ENCODE measurements at regions of chr18 and their contacts with region 1.

Region 1: DNA sequence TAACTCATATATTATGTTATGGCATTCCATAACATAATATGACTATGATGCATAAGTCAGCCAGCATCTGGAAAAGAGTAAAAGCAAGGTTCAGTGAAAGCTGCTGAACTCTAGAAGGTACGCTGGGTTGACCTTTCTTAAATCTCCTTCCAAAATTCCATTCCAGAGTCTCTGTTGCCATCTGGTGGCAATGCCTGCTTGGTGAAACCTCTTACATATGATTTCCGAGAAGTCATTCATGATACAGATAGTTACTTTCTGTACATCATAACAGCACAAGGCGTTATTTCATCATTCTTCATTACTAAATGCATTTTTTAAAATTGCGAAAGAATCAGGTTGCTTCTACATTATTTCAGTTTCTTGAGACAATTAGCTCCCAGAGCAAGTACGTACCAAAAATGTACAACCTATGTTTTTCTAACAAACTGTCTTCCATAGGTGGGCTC is 7.0 kb upstream of the EPG5 start:
- DNase-seq: peak; percentile 91
- H3K4me3 Mint-ChIP-seq: no peak overlapping the region
- H3K27ac Mint-ChIP-seq: peak overlapping the region; percentile 78
- H3K4me1 Mint-ChIP-seq: peaks cover 14% of the 10 kb centered on the region
- H3K27me3 Mint-ChIP-seq: no peaks in the 10 kb centered on the region

Region 2: GRCh38 chr18:45275367-45276113 is 698.6 kb before region 1 on chr18:
- CTCF ChIA-PET with region 1: no interaction called
- intact Hi-C with region 1: loop called (anchors 5 kb)
- DNase-seq: no peak
- H3K4me3 Mint-ChIP-seq: no peak overlapping the region
- H3K27ac Mint-ChIP-seq: no peak overlapping the region
- H3K4me1 Mint-ChIP-seq: no peaks in the 10 kb centered on the region
- H3K27me3 Mint-ChIP-seq: peaks cover 2% of the 10 kb centered on the region

Region 3: DNA sequence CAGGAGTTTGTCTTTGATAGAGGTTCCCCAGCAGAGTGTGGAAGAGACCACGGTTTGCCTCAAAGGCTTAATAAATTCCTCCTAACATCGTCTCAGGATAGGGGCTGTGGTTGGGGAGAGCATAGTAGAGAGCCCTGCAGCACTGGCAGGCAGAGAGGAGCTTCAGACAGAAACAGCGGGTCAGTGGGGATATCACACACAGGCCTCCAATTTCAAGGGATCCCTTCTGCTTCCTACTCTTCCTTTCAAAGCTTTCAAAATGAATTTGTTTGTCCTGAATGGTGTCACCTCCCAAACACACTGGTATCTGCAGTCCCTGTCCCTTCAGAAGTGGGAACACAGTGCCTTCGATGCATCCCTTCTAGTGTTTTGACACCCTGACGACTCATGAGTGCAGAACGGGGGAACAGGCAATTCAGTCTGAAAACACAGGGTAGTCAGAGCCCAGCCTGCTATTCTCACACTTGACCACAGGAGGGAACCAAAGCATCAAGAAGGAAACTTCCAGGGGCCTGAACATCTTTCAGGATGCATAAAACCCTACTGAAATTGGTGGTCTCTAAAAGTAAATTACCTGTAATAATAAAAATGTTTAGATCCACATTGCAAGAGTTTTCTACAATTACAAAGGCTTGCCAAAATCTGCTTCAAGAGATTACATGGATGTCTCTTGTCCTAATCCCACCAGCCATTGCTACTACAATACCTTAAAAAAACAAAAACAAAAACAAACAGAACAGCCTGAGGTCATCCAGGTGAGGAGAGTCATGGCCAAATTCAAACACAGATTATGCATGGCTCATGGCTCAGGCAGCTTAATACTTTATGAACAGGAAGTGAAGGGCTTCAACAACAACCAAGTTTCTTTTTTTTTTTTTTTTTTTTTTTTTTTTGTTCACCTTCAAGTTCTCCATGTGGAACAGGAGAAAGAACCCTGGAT is 309.0 kb before region 1 on chr18:
- CTCF ChIA-PET with region 1: interaction called, 18 read pairs
- intact Hi-C with region 1: loop called (anchors 1 kb)
- DNase-seq: peak; percentile 82
- H3K4me3 Mint-ChIP-seq: no peak overlapping the region
- H3K27ac Mint-ChIP-seq: no peak overlapping the region
- H3K4me1 Mint-ChIP-seq: peaks cover 52% of the 10 kb centered on the region
- H3K27me3 Mint-ChIP-seq: no peaks in the 10 kb centered on the region

Region 4: DNA sequence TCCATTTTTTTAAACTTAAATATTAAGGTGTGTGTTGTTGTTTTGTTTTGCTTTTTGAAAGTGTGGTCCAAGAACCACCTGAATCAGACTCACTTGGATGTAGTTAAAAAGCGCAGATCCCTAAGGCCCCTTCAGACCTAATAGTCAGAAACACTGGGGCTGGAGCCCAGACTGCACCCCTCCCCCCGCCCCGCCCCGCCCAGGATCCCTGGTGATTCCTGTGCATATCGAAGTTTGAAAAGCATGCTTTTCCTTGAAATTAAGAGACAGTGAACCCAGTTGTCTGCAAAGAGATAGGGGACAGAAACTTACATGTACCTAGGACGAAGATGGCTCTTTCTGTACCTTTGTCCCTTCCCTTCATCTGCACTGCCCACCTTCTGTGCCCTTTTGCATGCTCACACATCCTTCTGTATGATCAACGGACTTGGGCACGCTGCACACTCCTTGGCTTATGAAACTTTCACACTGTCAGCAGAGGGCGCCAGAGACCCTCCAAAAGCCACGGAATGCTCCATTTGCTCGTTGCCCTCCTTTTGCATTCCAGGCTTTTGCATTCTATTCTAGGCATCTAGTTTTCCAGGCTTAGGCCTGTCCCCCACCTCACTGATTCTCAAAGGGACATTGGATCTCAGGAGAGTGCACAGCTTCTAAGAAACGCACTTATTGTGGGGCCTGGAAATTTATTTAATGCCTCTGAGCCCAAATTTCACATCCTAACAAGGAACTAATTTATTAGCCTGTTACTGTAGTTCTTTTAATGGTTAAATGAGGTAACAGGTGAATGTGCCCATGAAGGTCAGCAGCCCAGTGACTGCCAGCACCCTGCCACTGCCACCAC is 282.9 kb before region 1 on chr18:
- CTCF ChIA-PET with region 1: interaction called, 4 read pairs
- intact Hi-C with region 1: loop called (anchors 1 kb)
- DNase-seq: peak; percentile 89
- H3K4me3 Mint-ChIP-seq: no peak overlapping the region
- H3K27ac Mint-ChIP-seq: no peak overlapping the region
- H3K4me1 Mint-ChIP-seq: peaks cover 36% of the 10 kb centered on the region
- H3K27me3 Mint-ChIP-seq: no peaks in the 10 kb centered on the region

Region 5: DNA sequence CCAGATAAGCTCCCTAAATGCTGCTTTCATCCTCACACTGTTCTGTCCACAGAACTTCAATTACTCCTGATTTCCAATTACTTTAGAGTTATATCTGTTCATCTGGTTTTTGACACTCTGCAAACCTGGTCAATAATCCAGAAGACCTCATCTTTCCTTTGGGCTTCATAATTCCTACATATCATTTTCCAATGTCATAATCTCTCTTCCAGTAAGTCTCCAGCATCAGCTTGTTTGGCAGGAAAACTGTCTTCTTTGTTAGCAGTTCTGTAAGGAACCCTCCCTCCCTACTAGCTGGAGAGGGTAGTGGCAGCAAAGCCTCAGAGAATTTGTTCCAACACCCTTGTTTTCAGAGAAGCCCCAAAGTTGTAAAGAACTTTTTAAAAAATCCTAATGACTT is 262.1 kb before region 1 on chr18:
- CTCF ChIA-PET with region 1: no interaction called
- intact Hi-C with region 1: no loop called
- DNase-seq: no peak
- H3K4me3 Mint-ChIP-seq: no peak overlapping the region
- H3K27ac Mint-ChIP-seq: no peak overlapping the region
- H3K4me1 Mint-ChIP-seq: no peaks in the 10 kb centered on the region
- H3K27me3 Mint-ChIP-seq: no peaks in the 10 kb centered on the region

Region 6: DNA sequence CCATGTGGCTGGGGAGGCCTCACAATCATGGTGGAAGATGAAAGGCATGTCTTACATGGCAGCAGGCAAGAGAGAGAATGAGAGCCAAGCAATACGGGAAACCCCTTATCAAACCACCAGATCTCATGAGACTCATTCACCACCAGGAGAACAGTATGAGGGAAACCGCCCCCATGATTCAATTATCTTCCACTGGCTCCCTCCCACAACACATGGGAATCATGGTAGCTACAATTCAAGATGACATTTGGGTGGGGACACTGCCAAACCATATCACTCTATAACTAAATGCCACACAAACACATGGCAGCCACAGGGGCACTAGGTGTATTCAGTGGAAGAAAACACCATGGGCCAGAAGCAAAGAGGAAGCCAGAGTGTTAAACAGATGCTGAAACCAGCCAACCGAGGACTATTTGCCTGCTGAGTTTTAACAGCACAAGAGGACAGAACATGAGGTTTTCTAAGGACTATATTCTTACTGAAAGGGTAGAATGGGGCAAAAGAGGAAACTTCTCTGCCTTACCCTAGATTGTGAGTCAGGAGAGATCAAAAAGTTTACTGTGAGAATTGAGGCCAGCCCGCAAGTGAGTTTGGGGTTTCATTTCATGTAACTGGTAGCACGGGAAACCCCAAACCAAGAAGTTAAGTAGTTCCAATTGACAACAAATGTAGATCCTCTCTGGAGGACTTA is 99.5 kb before region 1 on chr18:
- CTCF ChIA-PET with region 1: no interaction called
- intact Hi-C with region 1: loop called (anchors 1 kb)
- DNase-seq: peak; percentile 88
- H3K4me3 Mint-ChIP-seq: peak overlapping the region; percentile 1
- H3K27ac Mint-ChIP-seq: peak overlapping the region; percentile 95
- H3K4me1 Mint-ChIP-seq: peaks cover 31% of the 10 kb centered on the region
- H3K27me3 Mint-ChIP-seq: no peaks in the 10 kb centered on the region

Region 7: GRCh38 chr18:45920367-45920766 is 53.7 kb before region 1 on chr18:
- CTCF ChIA-PET with region 1: interaction called, 4 read pairs
- intact Hi-C with region 1: loop called (anchors 1 kb)
- DNase-seq: peak; percentile 30
- H3K4me3 Mint-ChIP-seq: no peak overlapping the region
- H3K27ac Mint-ChIP-seq: no peak overlapping the region
- H3K4me1 Mint-ChIP-seq: peaks cover 13% of the 10 kb centered on the region
- H3K27me3 Mint-ChIP-seq: no peaks in the 10 kb centered on the region

Region 8: DNA sequence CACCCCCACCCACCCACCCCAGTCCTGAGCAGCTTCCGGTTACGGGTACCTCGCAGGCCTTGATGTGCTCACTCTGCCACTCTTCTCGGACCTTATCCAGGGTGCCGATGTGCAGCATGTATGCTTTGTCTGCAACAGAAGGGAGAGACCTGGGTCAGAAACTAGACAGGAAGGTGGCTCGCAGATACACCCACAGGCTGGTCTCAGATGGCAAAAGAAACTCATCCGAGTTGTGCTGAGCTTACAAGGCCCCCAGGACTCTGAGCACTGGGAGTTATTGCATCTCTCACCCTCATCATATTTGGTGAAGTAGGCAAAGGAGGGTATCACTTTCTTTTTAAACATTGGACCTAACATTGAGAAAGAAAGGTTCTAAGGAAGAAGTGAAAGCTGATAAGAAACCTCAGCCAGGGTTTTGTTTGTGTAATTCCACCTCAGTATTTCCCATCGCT is 23.6 kb after region 1 on chr18:
- CTCF ChIA-PET with region 1: interaction called, 8 read pairs
- intact Hi-C with region 1: loop called (anchors 1 kb)
- DNase-seq: peak; percentile 45
- H3K4me3 Mint-ChIP-seq: peak overlapping the region; percentile 73
- H3K27ac Mint-ChIP-seq: peak overlapping the region; percentile 88
- H3K4me1 Mint-ChIP-seq: peaks cover 39% of the 10 kb centered on the region
- H3K27me3 Mint-ChIP-seq: no peaks in the 10 kb centered on the region